ENCODE measurements at regions of chr1 and their contacts with region 1.

Region 1: GRCh38 chr1:203871107-203871875 is 9.9 kb downstream of the SNRPE start:
- DNase-seq: peak in 1 of 2 experiments; percentile 19
- H3K4me3 ChIP-seq: no peak overlapping the region
- H3K27ac ChIP-seq: no peak overlapping the region
- H3K4me1 ChIP-seq: peaks cover 0 to 5% (median 0%) of the 10 kb centered on the region in 4 experiments; a peak in 1 of 7 replicates
- H3K27me3 ChIP-seq: no peaks in the 10 kb centered on the region
- CTCF ChIP-seq: peak; percentile 20 to 100 (median 91)
- EP300 ChIP-seq: no peak
- POLR2A ChIP-seq: no peak
- RAD21 ChIP-seq: peak; percentile 98

Region 2: DNA sequence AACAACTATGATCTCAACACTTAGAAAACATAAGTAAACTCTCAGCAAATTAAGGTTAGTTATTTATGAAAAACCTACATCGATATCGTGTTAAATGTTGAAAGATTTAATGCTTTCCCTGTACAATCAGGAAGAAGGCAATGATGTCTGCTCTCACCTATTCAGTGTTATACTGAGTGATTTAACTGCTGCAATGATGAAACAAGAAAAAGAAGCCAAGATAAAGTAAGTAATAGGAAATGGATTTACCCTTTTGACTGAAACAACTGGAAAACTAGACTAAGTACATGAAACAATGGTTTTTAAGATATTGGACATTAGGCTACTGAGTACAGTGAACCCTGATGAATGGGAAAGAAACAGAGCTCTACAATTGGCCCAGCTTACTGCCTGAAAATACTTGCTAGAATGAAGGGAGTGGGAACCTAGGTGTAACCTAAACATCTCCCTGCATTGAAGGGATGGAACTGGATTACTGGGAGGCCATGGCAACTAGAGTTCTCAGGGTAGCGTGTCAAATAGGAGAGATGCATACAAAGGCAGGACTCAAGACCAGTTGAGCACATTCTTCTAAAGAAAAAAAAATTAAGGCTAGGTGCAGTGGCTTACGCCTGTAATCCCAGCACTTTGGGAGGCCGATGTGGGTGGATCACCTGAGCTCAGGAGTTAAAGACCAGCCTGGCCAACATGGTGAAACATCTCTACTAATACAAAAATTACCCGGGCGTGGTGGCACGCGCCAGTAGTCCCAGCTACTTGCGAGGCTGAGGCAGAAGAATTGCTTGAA is 27.4 kb after region 1 on chr1:
- CTCF ChIA-PET with region 1: interaction called, 14 read pairs
- POLR2A ChIA-PET with region 1: no interaction called
- DNase-seq: no peak
- H3K4me3 ChIP-seq: no peak overlapping the region
- H3K27ac ChIP-seq: no peak overlapping the region
- H3K4me1 ChIP-seq: no peaks in the 10 kb centered on the region
- H3K27me3 ChIP-seq: no peaks in the 10 kb centered on the region
- CTCF ChIP-seq: no peak
- EP300 ChIP-seq: no peak
- POLR2A ChIP-seq: no peak
- RAD21 ChIP-seq: no peak

Region 3: DNA sequence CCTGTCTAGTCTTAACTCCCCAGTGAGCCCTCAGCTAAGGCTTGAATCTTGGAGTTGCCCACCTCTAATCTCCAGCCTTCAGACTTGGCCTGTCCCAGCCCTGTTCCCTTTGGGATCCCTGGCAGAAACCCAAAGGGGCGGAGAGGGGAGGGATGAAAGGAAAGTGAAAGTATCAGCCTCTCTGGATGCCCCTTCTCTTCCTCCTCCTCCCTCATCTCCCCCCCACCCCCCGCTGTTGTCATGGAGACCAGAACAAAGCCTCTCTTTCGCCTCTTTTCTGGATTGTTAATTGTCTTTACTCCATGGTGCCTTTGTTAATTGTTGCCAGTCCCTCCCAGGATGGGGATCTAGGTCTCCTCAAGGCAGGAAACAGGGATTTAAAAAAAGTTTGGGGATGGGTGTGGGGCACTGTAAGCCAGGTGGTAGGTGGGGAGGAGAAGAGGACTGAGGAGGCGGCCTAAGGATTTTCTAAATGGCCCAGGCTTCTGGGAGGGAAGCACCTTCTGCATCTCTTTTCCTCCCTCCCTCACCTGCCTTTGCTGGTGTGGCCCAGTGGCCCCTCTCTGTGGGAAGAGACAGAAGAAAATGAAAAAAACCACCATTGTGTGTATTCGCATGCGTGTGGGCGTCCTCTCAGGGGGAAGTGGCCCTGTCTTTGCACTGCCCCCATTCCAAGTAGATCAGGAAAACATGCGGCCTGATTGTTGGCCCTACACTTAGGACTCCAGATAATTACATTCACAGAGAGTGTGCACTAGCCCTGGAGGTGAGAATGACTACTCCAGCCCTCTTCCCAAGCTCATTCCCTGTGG is 194.1 kb after region 1 on chr1:
- CTCF ChIA-PET with region 1: interaction called, 26 read pairs
- POLR2A ChIA-PET with region 1: interaction called, 6 read pairs
- DNase-seq: peak; percentile 70 to 75
- H3K4me3 ChIP-seq: peak overlapping the region in 1 of 4 experiments; percentile 28; a peak in 2 of 8 replicates
- H3K27ac ChIP-seq: peak overlapping the region; percentile 61
- H3K4me1 ChIP-seq: peaks cover 11 to 19% (median 14%) of the 10 kb centered on the region in 4 experiments
- H3K27me3 ChIP-seq: no peaks in the 10 kb centered on the region
- CTCF ChIP-seq: no peak
- EP300 ChIP-seq: no peak
- POLR2A ChIP-seq: no peak
- RAD21 ChIP-seq: no peak

Region 4: GRCh38 chr1:204089044-204089751 is 217.9 kb after region 1 on chr1:
- CTCF ChIA-PET with region 1: interaction called, 34 read pairs
- POLR2A ChIA-PET with region 1: interaction called, 7 read pairs
- DNase-seq: peak in 1 of 2 experiments; percentile 59
- H3K4me3 ChIP-seq: no peak overlapping the region
- H3K27ac ChIP-seq: no peak overlapping the region
- H3K4me1 ChIP-seq: peaks cover 37 to 64% (median 50%) of the 10 kb centered on the region in 4 experiments
- H3K27me3 ChIP-seq: no peaks in the 10 kb centered on the region
- CTCF ChIP-seq: peak in 1 of 3 experiments; percentile 12; a peak in 1 of 4 replicates
- EP300 ChIP-seq: no peak
- POLR2A ChIP-seq: no peak
- RAD21 ChIP-seq: peak in 1 of 2 experiments; percentile 30; a peak in 1 of 4 replicates

Region 5: GRCh38 chr1:204123376-204123775 is 252.1 kb after region 1 on chr1:
- CTCF ChIA-PET with region 1: interaction called, 261 read pairs
- POLR2A ChIA-PET with region 1: interaction called, 174 read pairs
- DNase-seq: peak in 1 of 2 experiments; percentile 85
- H3K4me3 ChIP-seq: no peak overlapping the region
- H3K27ac ChIP-seq: no peak overlapping the region
- H3K4me1 ChIP-seq: peaks cover 0 to 16% (median 2%) of the 10 kb centered on the region in 4 experiments; a peak in 5 of 7 replicates
- H3K27me3 ChIP-seq: no peaks in the 10 kb centered on the region; a peak in 1 of 7 replicates
- CTCF ChIP-seq: peak in 2 of 3 experiments; percentile 84 to 87; a peak in 3 of 4 replicates
- EP300 ChIP-seq: no peak
- POLR2A ChIP-seq: no peak
- RAD21 ChIP-seq: peak; percentile 81 to 87

Region 6: GRCh38 chr1:204151552-204152309 is 280.4 kb after region 1 on chr1 and contains the start of gene ETNK2:
- CTCF ChIA-PET with region 1: interaction called, 16 read pairs
- POLR2A ChIA-PET with region 1: interaction called, 13 read pairs
- DNase-seq: peak in 1 of 2 experiments; percentile 89
- H3K4me3 ChIP-seq: peak within 1 kb of the TSS; percentile 61 to 77 (median 68)
- H3K27ac ChIP-seq: no peak within 1 kb of the TSS
- H3K4me1 ChIP-seq: peaks cover 0 to 40% (median 28%) of the 10 kb centered on the region in 4 experiments; a peak in 6 of 7 replicates
- H3K27me3 ChIP-seq: peaks cover 0 to 18% (median 17%) of the 10 kb centered on the region in 4 experiments; a peak in 5 of 7 replicates
- CTCF ChIP-seq: no peak
- EP300 ChIP-seq: no peak
- POLR2A ChIP-seq: no peak
- RAD21 ChIP-seq: no peak
- total RNA-seq, gene ETNK2: 20.1 and 23.1 TPM in 2 replicates

Measured in H1 (cell line).